ENCODE measurements at regions of chr10 and their contacts with region 1.

Region 1: DNA sequence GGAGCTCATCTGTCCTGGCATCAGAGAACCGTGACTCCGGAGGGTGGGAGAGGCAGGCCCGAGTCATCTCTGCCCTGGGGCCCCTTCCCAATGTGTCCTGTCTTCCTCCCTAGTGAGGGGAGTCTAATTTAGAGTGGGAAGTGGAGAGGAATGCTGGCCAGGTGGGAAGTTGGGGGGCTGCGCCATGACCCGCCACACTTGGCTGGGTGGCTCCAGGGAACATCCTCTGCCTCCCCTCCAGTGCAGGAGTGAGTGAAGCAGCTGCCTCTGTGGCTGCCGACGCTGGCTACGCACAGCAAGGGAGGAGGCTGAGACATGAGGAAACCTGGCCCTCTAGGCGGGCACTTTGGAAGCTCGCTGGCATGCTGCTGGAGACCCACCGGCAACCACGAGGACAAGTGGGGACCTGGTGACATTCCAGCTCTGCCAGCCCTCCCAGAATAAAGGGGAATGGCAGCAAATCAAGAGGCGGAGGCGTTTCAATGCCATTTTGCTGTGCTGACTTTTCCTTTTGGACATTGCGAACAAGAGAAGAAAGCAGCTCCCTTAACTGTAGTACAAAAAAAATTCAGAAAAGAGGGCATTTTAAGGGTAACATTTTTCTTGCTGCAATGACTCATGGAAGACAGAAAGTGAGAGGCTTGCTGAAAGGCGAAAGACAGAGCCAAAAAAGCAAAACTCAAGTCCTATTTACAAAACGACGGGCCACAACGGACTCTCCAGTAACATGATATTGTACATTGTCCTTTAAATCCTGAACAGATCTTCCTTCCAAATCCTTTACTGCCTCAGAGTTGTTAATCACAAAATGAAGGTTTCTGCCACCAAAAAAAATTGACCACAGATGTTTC is 121.2 kb upstream of the PITRM1 start:
- DNase-seq: no peak

Region 2: DNA sequence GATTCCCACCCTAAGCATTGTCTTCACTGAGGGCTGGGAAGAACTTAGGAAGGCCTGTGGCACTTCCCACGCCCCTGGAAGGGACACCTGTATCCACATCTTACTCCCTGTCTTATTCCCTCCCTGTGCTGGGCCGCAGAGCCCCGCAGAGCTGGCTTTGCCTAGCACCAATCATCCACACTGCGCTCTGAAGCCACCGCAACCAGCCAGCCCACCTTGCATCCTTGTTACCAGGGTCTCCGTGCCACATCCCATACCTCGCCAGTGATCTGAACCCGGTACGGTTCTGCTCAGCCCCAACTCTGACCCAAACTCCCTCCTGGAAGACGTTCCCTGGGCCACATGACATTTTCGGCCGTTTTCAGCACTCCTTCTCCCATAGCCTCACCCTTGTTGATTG is 19.8 kb before region 1 on chr10:
- intact Hi-C with region 1: loop called in 1 of 2 experiments (anchors 1 kb)
- DNase-seq: no peak